ENCODE measurements at regions of chr16 and their contacts with region 1.

Region 1: GRCh38 chr16:53892155-53892554 is 188.2 kb downstream of the FTO start:
- DNase-seq: peak; percentile 81
- ATAC-seq: peak; percentile 78
- H3K4me3 ChIP-seq: no peak overlapping the region
- H3K27ac ChIP-seq: no peak overlapping the region
- H3K4me1 ChIP-seq: peaks cover 4% of the 10 kb centered on the region
- H3K27me3 ChIP-seq: no peaks in the 10 kb centered on the region
- CTCF ChIP-seq: peak; percentile 85
- POLR2A ChIP-seq: no peak
- RAD21 ChIP-seq: peak; percentile 83

Region 2: GRCh38 chr16:53549970-53550690 is 342.0 kb before region 1 on chr16:
- CTCF ChIA-PET with region 1: no interaction called
- POLR2A ChIA-PET with region 1: no interaction called
- dilution Hi-C with region 1: no loop called
- in situ Hi-C with region 1: no loop called
- intact Hi-C with region 1: loop called (anchors 5 kb)
- DNase-seq: peak; percentile 82
- ATAC-seq: peak; percentile 95
- H3K4me3 ChIP-seq: no peak overlapping the region
- H3K27ac ChIP-seq: no peak overlapping the region
- H3K4me1 ChIP-seq: no peaks in the 10 kb centered on the region; the same call in 1 of the 2 replicates
- H3K27me3 ChIP-seq: peaks cover 46% of the 10 kb centered on the region
- CTCF ChIP-seq: peak; percentile 92
- POLR2A ChIP-seq: 0 out of 2 replicates have a peak, but pooled peaks have one; percentile 33
- RAD21 ChIP-seq: peak; percentile 92

Region 3: DNA sequence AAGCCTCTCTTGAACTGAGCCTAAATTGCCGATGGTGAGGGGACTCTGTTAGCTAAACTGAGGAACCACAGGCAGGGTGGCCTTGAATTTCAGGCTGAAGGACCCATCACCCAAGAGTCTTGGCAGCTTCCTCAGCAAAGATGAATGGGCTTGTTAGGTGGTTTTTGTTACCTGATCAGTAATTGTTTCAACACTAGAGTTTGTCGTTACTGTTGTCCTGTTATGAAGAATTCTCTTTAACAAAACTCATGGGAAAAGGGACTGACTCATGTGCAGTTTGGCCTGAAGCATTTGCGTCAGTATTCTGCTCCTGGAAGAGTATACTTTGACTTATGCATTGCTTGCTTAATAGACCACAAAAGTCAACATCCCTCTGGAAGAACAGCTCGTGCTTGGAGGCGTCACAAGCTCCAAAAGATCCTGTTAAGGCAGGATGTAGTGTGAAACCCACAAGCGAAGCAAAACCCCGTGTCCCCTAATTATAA is 188.4 kb after region 1 on chr16:
- CTCF ChIA-PET with region 1: no interaction called
- POLR2A ChIA-PET with region 1: no interaction called
- dilution Hi-C with region 1: no loop called
- in situ Hi-C with region 1: no loop called
- intact Hi-C with region 1: loop called (anchors 10 kb)
- DNase-seq: peak; percentile 98
- ATAC-seq: peak; percentile 94
- H3K4me3 ChIP-seq: no peak overlapping the region
- H3K27ac ChIP-seq: peak overlapping the region; percentile 57; the same call in 1 of the 2 replicates
- H3K4me1 ChIP-seq: peaks cover 7% of the 10 kb centered on the region; the same call in 1 of the 2 replicates
- H3K27me3 ChIP-seq: no peaks in the 10 kb centered on the region
- CTCF ChIP-seq: no peak
- POLR2A ChIP-seq: no peak
- RAD21 ChIP-seq: no peak

Region 4: GRCh38 chr16:54286090-54286993 is 394.2 kb after region 1 on chr16 and contains the start of gene IRX3:
- CTCF ChIA-PET with region 1: no interaction called
- POLR2A ChIA-PET with region 1: no interaction called
- dilution Hi-C with region 1: no loop called
- in situ Hi-C with region 1: no loop called
- intact Hi-C with region 1: loop called (anchors 5 kb)
- DNase-seq: peak; percentile 4
- ATAC-seq: peak; percentile 58
- H3K4me3 ChIP-seq: peak within 1 kb of the TSS; percentile 71
- H3K27ac ChIP-seq: no peak within 1 kb of the TSS; the same call in 1 of the 2 replicates
- H3K4me1 ChIP-seq: peaks cover 4% of the 10 kb centered on the region; the same call in 1 of the 2 replicates
- H3K27me3 ChIP-seq: peaks cover 97% of the 10 kb centered on the region
- CTCF ChIP-seq: no peak
- POLR2A ChIP-seq: no peak
- RAD21 ChIP-seq: no peak
- total RNA-seq, gene IRX3: not detected in 2 replicates

Region 5: GRCh38 chr16:54957403-54958171 is 1065.4 kb after region 1 on chr16:
- CTCF ChIA-PET with region 1: no interaction called
- POLR2A ChIA-PET with region 1: no interaction called
- dilution Hi-C with region 1: no loop called
- in situ Hi-C with region 1: no loop called
- intact Hi-C with region 1: loop called (anchors 1 kb)
- DNase-seq: no peak
- ATAC-seq: no peak
- H3K4me3 ChIP-seq: no peak overlapping the region
- H3K27ac ChIP-seq: no peak overlapping the region
- H3K4me1 ChIP-seq: no peaks in the 10 kb centered on the region
- H3K27me3 ChIP-seq: no peaks in the 10 kb centered on the region
- CTCF ChIP-seq: peak; percentile 32; the same call in 1 of the 2 replicates
- POLR2A ChIP-seq: no peak
- RAD21 ChIP-seq: peak; percentile 33; the same call in 1 of the 2 replicates

Region 6: GRCh38 chr16:55370762-55371482 is 1478.8 kb after region 1 on chr16:
- CTCF ChIA-PET with region 1: no interaction called
- POLR2A ChIA-PET with region 1: no interaction called
- dilution Hi-C with region 1: no loop called
- in situ Hi-C with region 1: no loop called
- intact Hi-C with region 1: loop called (anchors 5 kb)
- DNase-seq: peak; percentile 8
- ATAC-seq: peak; percentile 81
- H3K4me3 ChIP-seq: no peak overlapping the region
- H3K27ac ChIP-seq: no peak overlapping the region
- H3K4me1 ChIP-seq: no peaks in the 10 kb centered on the region
- H3K27me3 ChIP-seq: peaks cover 19% of the 10 kb centered on the region
- CTCF ChIP-seq: peak; percentile 37
- POLR2A ChIP-seq: no peak
- RAD21 ChIP-seq: peak; percentile 43

Measured in IMR-90 (cell line).